Naive thymus-derived CD4-positive, alpha-beta T cell (primary cell): ENCODE measurements at regions of chr20 and their contacts with region 1.

Region 1: GRCh38 chr20:32789896-32790750 is 27.9 kb downstream of the DNMT3B start:
- DNase-seq: peak; percentile 50 to 77 (median 68)
- ATAC-seq: peak; percentile 84
- H3K4me3 ChIP-seq: no peak overlapping the region
- H3K4me3 Mint-ChIP-seq: no peak overlapping the region
- H3K27ac ChIP-seq: no peak overlapping the region
- H3K27ac Mint-ChIP-seq: peak overlapping the region in 6 of 9 donors; percentile 6 to 86 (median 16)
- H3K4me1 ChIP-seq: peaks cover 3 to 36% of the 10 kb centered on the region in 2 donors
- H3K4me1 Mint-ChIP-seq: peaks cover 14 to 47% (median 38%) of the 10 kb centered on the region in 7 donors
- H3K27me3 ChIP-seq: no peaks in the 10 kb centered on the region
- H3K27me3 Mint-ChIP-seq: no peaks in the 10 kb centered on the region

Region 2: GRCh38 chr20:32779500-32780211 is 10.5 kb before region 1 on chr20:
- CTCF ChIA-PET with region 1: interaction called, 10 read pairs
- POLR2A ChIA-PET with region 1: no interaction called
- intact Hi-C with region 1: no loop called
- DNase-seq: no peak
- ATAC-seq: no peak
- H3K4me3 ChIP-seq: no peak overlapping the region
- H3K4me3 Mint-ChIP-seq: no peak overlapping the region
- H3K27ac ChIP-seq: no peak overlapping the region
- H3K27ac Mint-ChIP-seq: no peak overlapping the region
- H3K4me1 ChIP-seq: no peaks in the 10 kb centered on the region
- H3K4me1 Mint-ChIP-seq: peaks cover 3 to 36% (median 32%) of the 10 kb centered on the region in 7 donors
- H3K27me3 ChIP-seq: no peaks in the 10 kb centered on the region
- H3K27me3 Mint-ChIP-seq: no peaks in the 10 kb centered on the region

Region 3: GRCh38 chr20:32830437-32830836 is 40.3 kb after region 1 on chr20:
- CTCF ChIA-PET with region 1: interaction called, 5 read pairs
- POLR2A ChIA-PET with region 1: no interaction called
- intact Hi-C with region 1: loop called (anchors 2 to 5 kb)
- DNase-seq: peak in 2 of 9 donors; percentile 18 to 33
- ATAC-seq: peak; percentile 84
- H3K4me3 ChIP-seq: no peak overlapping the region
- H3K4me3 Mint-ChIP-seq: peak overlapping the region in 8 of 10 donors; percentile 12 to 70 (median 54)
- H3K27ac ChIP-seq: no peak overlapping the region
- H3K27ac Mint-ChIP-seq: peak overlapping the region; percentile 34 to 90 (median 85)
- H3K4me1 ChIP-seq: peaks cover 8 to 49% of the 10 kb centered on the region in 2 donors
- H3K4me1 Mint-ChIP-seq: peaks cover 35 to 87% (median 78%) of the 10 kb centered on the region in 7 donors
- H3K27me3 ChIP-seq: no peaks in the 10 kb centered on the region
- H3K27me3 Mint-ChIP-seq: no peaks in the 10 kb centered on the region

Region 4: GRCh38 chr20:32894026-32894483 is 103.9 kb after region 1 on chr20:
- CTCF ChIA-PET with region 1: interaction called, 3 read pairs
- POLR2A ChIA-PET with region 1: no interaction called
- intact Hi-C with region 1: loop called in 1 of 2 experiments (anchors 2 kb)
- DNase-seq: no peak
- ATAC-seq: no peak
- H3K4me3 ChIP-seq: no peak overlapping the region
- H3K4me3 Mint-ChIP-seq: no peak overlapping the region
- H3K27ac ChIP-seq: no peak overlapping the region
- H3K27ac Mint-ChIP-seq: no peak overlapping the region
- H3K4me1 ChIP-seq: no peaks in the 10 kb centered on the region
- H3K4me1 Mint-ChIP-seq: peaks cover 0 to 5% (median 0%) of the 10 kb centered on the region in 7 donors
- H3K27me3 ChIP-seq: no peaks in the 10 kb centered on the region
- H3K27me3 Mint-ChIP-seq: no peaks in the 10 kb centered on the region

Region 5: DNA sequence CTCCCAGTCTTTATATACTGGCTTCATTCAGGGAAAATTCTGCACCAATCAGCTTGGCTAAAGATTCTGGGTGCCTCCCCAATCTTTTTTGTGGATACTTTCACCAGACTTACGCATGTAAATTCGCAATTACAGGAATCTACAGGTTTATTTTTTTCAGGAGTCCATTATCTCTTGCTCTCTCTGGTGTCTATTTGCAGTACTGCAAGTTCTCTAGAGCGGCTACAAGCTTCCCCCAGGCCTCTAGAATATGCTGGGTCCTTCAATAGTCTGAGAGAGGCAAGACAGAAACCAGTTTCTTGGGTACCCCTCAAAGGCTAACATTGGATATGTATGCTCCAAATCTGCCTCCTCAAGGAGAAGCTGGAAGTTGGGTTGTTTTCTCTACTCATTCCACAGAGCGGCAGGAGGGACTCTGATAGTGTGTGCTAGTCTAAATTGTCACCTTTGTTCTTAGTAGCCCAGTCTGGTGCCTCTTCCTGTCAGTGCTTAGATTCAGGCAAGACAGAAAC is 155.6 kb after region 1 on chr20:
- CTCF ChIA-PET with region 1: interaction called, 5 read pairs
- POLR2A ChIA-PET with region 1: interaction called, 3 read pairs
- intact Hi-C with region 1: loop called (anchors 1 kb)
- DNase-seq: peak in 7 of 9 donors; percentile 22 to 67 (median 57)
- ATAC-seq: peak; percentile 93
- H3K4me3 ChIP-seq: peak overlapping the region; percentile 25
- H3K4me3 Mint-ChIP-seq: peak overlapping the region; percentile 34 to 85 (median 68)
- H3K27ac ChIP-seq: peak overlapping the region; percentile 57
- H3K27ac Mint-ChIP-seq: peak overlapping the region; percentile 79 to 96 (median 88)
- H3K4me1 ChIP-seq: peaks cover 8 to 33% of the 10 kb centered on the region in 2 donors
- H3K4me1 Mint-ChIP-seq: peaks cover 30 to 53% (median 48%) of the 10 kb centered on the region in 7 donors
- H3K27me3 ChIP-seq: no peaks in the 10 kb centered on the region
- H3K27me3 Mint-ChIP-seq: no peaks in the 10 kb centered on the region

Region 6: GRCh38 chr20:33097001-33097400 is 306.9 kb after region 1 on chr20:
- CTCF ChIA-PET with region 1: interaction called, 4 read pairs
- POLR2A ChIA-PET with region 1: no interaction called
- intact Hi-C with region 1: loop called in 1 of 2 experiments (anchors 1 kb)
- DNase-seq: no peak
- ATAC-seq: no peak
- H3K4me3 ChIP-seq: no peak overlapping the region
- H3K4me3 Mint-ChIP-seq: no peak overlapping the region
- H3K27ac ChIP-seq: no peak overlapping the region
- H3K27ac Mint-ChIP-seq: no peak overlapping the region
- H3K4me1 ChIP-seq: peaks cover 0 to 8% of the 10 kb centered on the region in 2 donors
- H3K4me1 Mint-ChIP-seq: peaks cover 0 to 12% (median 5%) of the 10 kb centered on the region in 7 donors
- H3K27me3 ChIP-seq: no peaks in the 10 kb centered on the region
- H3K27me3 Mint-ChIP-seq: peaks cover 0 to 4% (median 0%) of the 10 kb centered on the region in 5 donors

Region 7: DNA sequence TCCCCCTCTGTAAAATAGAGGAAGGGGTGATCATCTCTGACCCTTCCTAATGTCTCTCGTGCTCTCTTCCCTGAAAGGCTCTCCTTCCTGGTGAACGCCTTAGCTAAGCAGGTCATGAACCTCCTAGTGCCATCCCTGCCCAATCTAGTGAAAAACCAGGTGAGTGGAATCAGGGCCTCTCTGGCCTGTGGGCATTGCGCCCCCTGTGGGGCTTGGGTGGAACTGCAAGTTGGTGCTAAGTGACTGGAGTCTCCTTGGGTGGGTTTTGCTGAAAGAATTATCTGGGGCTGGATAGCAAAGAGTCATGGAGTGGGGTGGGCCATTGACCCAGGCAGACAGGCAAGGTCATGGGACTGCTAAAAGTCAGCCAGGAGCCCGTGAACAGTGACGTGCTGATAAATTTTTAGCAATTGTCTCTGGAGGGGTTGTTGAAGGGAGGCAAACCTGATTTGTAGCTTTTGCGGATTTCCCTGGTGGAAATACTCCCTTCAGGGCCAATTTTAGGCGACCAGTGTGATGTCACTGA is 501.8 kb after region 1 on chr20:
- CTCF ChIA-PET with region 1: interaction called, 5 read pairs
- POLR2A ChIA-PET with region 1: no interaction called
- intact Hi-C with region 1: loop called (anchors 1 kb)
- DNase-seq: peak; percentile 36 to 76 (median 57)
- ATAC-seq: peak; percentile 76
- H3K4me3 ChIP-seq: no peak overlapping the region
- H3K4me3 Mint-ChIP-seq: no peak overlapping the region
- H3K27ac ChIP-seq: no peak overlapping the region
- H3K27ac Mint-ChIP-seq: peak overlapping the region in 2 of 9 donors; percentile 1 to 10
- H3K4me1 ChIP-seq: no peaks in the 10 kb centered on the region
- H3K4me1 Mint-ChIP-seq: peaks cover 0 to 3% (median 0%) of the 10 kb centered on the region in 7 donors
- H3K27me3 ChIP-seq: no peaks in the 10 kb centered on the region
- H3K27me3 Mint-ChIP-seq: peaks cover 3 to 11% (median 5%) of the 10 kb centered on the region in 5 donors